MCF 10A (cell line): ENCODE measurements at regions of chr9 and their contacts with region 1.

Region 1: GRCh38 chr9:32350682-32351081 is 33.8 kb upstream of the ACO1 start:
- DNase-seq: peak; percentile 33
- H3K4me3 Mint-ChIP-seq: no peak overlapping the region
- H3K27ac Mint-ChIP-seq: no peak overlapping the region
- H3K4me1 Mint-ChIP-seq: no peaks in the 10 kb centered on the region
- H3K27me3 Mint-ChIP-seq: peaks cover 6% of the 10 kb centered on the region
- CTCF ChIP-seq: peak; percentile 28

Region 2: GRCh38 chr9:31839273-31839672 is 511.4 kb before region 1 on chr9:
- CTCF ChIA-PET with region 1: no interaction called
- POLR2A ChIA-PET with region 1: no interaction called
- intact Hi-C with region 1: loop called (anchors 1 kb)
- DNase-seq: peak; percentile 47
- H3K4me3 Mint-ChIP-seq: no peak overlapping the region
- H3K27ac Mint-ChIP-seq: no peak overlapping the region
- H3K4me1 Mint-ChIP-seq: no peaks in the 10 kb centered on the region
- H3K27me3 Mint-ChIP-seq: peaks cover 87% of the 10 kb centered on the region
- CTCF ChIP-seq: peak; percentile 19

Region 3: GRCh38 chr9:31908158-31908890 is 442.4 kb before region 1 on chr9:
- CTCF ChIA-PET with region 1: interaction called, 3 read pairs
- POLR2A ChIA-PET with region 1: no interaction called
- intact Hi-C with region 1: loop called (anchors 5 kb)
- DNase-seq: peak; percentile 82
- H3K4me3 Mint-ChIP-seq: peak overlapping the region; percentile 19
- H3K27ac Mint-ChIP-seq: peak overlapping the region; percentile 41
- H3K4me1 Mint-ChIP-seq: peaks cover 22% of the 10 kb centered on the region
- H3K27me3 Mint-ChIP-seq: no peaks in the 10 kb centered on the region
- CTCF ChIP-seq: no peak

Region 4: DNA sequence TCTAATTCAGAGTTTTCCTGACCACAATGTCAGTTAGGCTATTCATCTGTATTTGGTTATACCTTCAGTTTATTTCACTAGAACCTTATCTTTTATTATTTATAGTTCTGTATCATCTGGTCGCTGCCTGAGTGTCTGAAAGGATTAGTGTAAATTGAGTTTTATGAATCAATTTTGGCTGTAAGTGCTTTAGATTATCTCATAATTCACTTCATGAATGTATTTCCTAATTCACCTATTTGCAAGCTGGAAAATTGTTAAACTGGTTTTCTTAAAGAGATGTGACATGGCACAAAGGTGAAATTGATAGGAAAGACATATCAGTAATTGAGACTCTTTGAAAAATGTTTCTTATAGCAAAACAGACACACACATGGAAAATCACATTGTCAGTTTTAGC is 208.6 kb before region 1 on chr9:
- CTCF ChIA-PET with region 1: interaction called, 16 read pairs
- POLR2A ChIA-PET with region 1: no interaction called
- intact Hi-C with region 1: no loop called
- DNase-seq: no peak
- H3K4me3 Mint-ChIP-seq: no peak overlapping the region
- H3K27ac Mint-ChIP-seq: no peak overlapping the region
- H3K4me1 Mint-ChIP-seq: peaks cover 5% of the 10 kb centered on the region
- H3K27me3 Mint-ChIP-seq: peaks cover 50% of the 10 kb centered on the region
- CTCF ChIP-seq: no peak

Region 5: GRCh38 chr9:32264170-32264862 is 86.4 kb before region 1 on chr9:
- CTCF ChIA-PET with region 1: interaction called, 3 read pairs
- POLR2A ChIA-PET with region 1: no interaction called
- intact Hi-C with region 1: loop called (anchors 10 kb)
- DNase-seq: peak; percentile 60
- H3K4me3 Mint-ChIP-seq: no peak overlapping the region
- H3K27ac Mint-ChIP-seq: peak overlapping the region; percentile 49
- H3K4me1 Mint-ChIP-seq: no peaks in the 10 kb centered on the region
- H3K27me3 Mint-ChIP-seq: peaks cover 15% of the 10 kb centered on the region
- CTCF ChIP-seq: no peak